ENCODE measurements at regions of chr13 and their contacts with region 1.

Region 1: GRCh38 chr13:48303359-48304142 is at the start of gene RB1:
- DNase-seq: peak; percentile 97
- total RNA-seq, gene RB1: 27.6 TPM

Region 2: DNA sequence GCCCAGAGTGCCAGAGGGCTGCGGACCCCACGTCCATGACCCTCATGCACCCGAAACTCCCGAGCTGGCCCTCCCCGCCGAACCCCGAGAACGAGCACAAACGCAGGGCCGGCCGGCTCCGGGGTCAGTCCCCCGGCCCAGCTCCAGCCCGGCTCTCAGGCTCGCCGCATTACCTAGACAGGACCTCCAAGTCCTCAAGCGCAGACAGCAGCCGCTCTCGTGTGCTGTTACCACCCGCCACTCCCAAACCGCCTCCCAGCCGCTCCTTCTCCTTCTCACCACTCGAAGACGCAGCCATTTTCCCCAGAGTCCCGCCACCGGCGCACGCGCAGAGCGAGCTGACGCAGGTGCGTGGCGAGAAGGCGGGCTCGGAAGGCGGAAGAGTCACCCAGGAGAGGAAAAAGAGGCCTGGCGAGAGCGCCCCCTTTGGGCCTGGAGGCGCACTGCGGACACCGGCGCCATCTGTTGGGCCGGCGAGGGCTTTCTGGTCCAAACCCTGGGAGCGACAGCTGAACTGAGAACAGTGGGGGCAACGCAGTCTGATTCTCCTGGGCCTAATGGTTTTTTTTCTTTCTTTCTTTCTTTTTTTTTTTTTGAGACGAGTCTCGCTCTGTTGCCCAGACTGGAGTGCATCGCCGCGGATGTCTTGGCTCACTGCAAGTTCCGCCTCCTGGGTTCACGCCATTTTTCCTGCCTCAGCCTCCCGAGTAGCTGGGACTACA is 208.6 kb before region 1 on chr13 and contains the start of gene MED4:
- intact Hi-C with region 1: loop called (anchors 10 kb)
- DNase-seq: peak; percentile 97
- total RNA-seq, gene MED4: 39.6 TPM

Region 3: DNA sequence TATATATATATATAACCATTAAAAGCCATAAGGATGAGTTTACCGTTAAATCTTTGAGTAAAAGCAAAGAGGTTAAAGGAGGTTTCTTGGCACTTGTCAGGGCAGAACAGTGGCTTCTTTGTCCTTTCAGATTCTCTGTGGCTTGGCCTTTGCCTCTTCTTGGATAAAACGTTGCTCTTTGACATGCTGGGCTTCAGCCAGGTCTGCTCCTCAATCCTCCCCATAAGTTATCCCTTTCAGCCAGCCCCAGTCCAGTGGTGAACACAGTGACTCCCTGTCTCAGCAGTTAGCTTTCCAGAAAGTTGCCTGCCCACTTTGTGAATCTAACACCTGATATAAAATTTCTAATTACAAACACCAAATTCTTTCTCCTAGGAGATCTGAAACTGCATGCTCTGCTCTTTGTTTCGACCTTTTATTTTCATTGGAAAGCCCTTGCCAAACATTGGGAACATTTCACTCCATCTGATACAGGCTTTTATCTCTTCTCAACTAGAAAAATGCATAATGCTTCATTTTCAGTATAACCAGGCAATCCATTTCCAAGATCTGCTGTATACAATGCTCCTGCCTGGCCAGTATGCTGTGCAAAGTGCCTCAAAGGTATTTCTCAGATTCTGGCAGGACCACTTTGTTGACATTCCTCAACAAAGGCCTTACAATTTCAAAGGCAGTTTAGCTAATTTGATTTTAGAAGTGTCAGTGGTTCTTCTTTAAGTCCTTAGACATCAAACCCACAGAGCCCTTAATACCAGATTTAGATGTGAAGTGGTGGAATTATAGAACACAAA is 192.4 kb before region 1 on chr13:
- intact Hi-C with region 1: no loop called
- DNase-seq: no peak

Region 4: GRCh38 chr13:48126944-48127830 is 176.4 kb before region 1 on chr13:
- intact Hi-C with region 1: loop called (anchors 5 kb)
- DNase-seq: no peak

Region 5: GRCh38 chr13:48138270-48138669 is 165.3 kb before region 1 on chr13:
- intact Hi-C with region 1: no loop called
- DNase-seq: no peak

Region 6: DNA sequence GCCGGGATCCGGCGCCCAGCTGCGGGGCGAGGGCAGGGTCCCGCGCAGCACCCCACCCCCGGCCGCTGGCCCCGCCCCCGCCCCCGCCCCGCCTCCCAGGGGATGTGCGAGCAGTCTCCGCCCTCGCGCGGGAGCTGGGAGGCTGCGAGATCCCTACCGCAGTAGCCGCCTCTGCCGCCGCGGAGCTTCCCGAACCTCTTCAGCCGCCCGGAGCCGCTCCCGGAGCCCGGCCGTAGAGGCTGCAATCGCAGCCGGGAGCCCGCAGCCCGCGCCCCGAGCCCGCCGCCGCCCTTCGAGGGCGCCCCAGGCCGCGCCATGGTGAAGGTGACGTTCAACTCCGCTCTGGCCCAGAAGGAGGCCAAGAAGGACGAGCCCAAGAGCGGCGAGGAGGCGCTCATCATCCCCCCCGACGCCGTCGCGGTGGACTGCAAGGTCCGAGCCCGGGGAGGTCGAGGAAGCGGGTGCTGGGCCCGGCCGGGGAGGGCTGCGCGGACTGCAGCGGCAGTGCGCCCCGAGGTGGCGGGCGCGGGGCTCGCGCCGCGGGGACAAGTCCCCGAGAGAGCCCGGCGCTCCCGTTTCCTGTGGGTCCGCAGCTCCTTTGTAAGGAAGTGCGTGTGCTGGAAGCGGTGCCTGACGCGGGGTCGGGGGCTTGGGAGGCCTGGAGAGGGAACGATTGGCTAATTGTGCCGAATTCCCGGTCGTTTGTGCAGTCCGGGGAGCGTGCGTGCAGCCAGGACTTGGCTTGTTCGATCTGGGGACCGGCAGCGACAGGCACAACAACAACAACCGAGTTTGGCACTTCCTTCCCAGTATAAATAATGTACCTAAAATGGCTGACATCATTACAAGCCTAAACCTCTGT is 70.3 kb before region 1 on chr13 and contains the start of gene ITM2B:
- intact Hi-C with region 1: loop called (anchors 1 kb)
- DNase-seq: peak; percentile 94
- total RNA-seq, gene ITM2B: 386 TPM

Region 7: GRCh38 chr13:48251611-48252081 is 51.9 kb before region 1 on chr13:
- intact Hi-C with region 1: loop called (anchors 5 kb)
- DNase-seq: no peak